ENCODE measurements at regions of chr5 and their contacts with region 1.

Region 1: DNA sequence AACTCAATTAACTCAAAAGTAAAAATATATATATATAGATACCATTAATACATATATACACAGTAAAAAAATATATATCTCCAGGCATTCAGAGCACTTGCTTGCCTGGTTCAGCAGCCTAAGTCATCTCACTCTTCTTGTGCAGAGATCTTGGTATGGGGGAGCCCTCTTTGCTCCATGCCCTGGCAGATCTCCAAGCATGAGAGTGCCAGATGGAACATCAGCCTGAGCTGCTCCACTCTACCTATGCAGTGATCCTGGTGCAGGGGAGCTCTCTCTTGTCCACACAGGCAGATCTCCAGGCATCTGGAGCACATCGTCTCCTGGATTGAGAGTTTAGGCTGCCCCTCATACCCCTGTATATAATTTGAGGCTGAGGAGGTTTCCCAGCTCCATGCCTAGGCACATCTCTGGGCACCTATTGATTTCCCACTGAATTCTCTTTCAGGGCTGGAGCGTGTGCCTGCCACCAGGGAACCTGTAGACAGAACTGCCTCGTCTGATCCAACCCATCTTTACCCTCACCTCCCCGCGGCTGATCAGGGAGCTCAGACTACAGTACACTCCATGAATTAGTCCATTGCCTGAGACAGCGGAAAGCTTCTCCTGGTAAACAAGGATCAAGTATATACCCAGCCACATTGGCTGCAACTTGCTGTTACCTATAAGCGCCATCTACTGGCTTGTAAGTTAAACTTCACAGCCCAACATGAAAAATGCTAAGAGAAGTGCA is 342.4 kb upstream of the GRIA1 start:
- DNase-seq: no peak
- H3K4me3 ChIP-seq: no peak overlapping the region
- H3K27ac ChIP-seq: no peak overlapping the region
- H3K4me1 ChIP-seq: no peaks in the 10 kb centered on the region
- H3K27me3 ChIP-seq: peaks cover 15% of the 10 kb centered on the region
- CTCF ChIP-seq: peak; percentile 73

Region 2: GRCh38 chr5:152560512-152561137 is 587.4 kb before region 1 on chr5:
- intact Hi-C with region 1: loop called (anchors 5 kb)
- DNase-seq: peak; percentile 68
- H3K4me3 ChIP-seq: no peak overlapping the region
- H3K27ac ChIP-seq: no peak overlapping the region
- H3K4me1 ChIP-seq: peaks cover 6% of the 10 kb centered on the region
- H3K27me3 ChIP-seq: no peaks in the 10 kb centered on the region
- CTCF ChIP-seq: peak; percentile 88

Measured in left ventricle myocardium inferior (tissue), 1 donor.